ENCODE measurements at regions of chr1 and their contacts with region 1.

Region 1: DNA sequence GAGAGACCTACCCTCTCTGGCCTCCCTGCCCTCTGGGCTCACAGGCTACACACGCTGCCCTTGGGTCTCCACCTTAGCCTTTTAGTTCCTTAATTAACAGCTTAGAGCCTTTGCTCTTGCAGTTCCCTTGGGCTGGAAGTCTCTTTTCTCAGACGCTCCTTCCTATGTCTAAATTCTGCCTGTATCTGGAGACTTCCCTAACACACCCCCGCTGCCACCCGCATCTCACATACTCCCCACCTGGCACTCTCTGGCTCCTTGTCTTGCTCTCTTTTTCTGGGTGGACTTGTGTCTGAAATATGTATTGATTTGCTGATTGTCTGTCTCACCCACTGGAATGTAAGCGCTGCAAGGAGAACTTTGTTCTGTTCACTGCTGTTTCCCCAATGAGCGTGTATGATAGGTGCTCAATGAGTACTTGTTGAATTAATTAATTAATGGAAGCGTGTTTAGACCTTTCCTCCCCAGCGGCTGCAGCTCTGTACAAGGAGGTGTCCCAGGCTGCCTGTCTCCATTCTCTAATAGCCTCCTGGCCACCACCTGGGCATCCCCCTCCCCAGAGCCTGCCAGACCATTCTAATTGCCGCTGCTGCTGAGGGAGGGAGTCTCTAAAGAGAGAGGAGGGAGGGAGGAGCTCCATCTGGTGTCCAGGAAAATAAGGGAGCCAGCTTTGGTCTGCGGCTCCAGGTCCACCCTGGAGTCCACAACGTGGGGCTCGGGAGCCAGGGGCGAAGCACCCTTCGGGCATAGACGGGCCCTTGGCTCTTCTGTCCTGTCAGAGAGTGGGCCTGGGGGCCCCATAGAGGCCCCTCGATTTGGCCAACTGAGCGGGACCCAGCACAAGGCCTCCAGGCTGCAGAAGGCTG is 95.4 kb downstream of the RNF220 start:
- DNase-seq: peak in 9 of 10 donors; percentile 42 to 74 (median 61)
- H3K4me3 ChIP-seq: peak overlapping the region in 35 of 59 donors; percentile 0 to 46 (median 25)
- H3K27ac ChIP-seq: peak overlapping the region; percentile 40 to 100 (median 93)
- H3K27me3 ChIP-seq: peaks cover 0 to 10% (median 0%) of the 10 kb centered on the region in 45 donors
- CTCF ChIP-seq: peak in 55 of 56 donors; percentile 31 to 76 (median 58)

Region 2: GRCh38 chr1:44220001-44220733 is 280.2 kb before region 1 on chr1:
- intact Hi-C with region 1: loop called in 1 of 2 experiments (anchors 10 kb)
- DNase-seq: no peak
- H3K4me3 ChIP-seq: no peak overlapping the region
- H3K27ac ChIP-seq: peak overlapping the region in 46 of 59 donors; percentile 0 to 75 (median 38)
- H3K27me3 ChIP-seq: no peaks in the 10 kb centered on the region
- CTCF ChIP-seq: no peak

Region 3: DNA sequence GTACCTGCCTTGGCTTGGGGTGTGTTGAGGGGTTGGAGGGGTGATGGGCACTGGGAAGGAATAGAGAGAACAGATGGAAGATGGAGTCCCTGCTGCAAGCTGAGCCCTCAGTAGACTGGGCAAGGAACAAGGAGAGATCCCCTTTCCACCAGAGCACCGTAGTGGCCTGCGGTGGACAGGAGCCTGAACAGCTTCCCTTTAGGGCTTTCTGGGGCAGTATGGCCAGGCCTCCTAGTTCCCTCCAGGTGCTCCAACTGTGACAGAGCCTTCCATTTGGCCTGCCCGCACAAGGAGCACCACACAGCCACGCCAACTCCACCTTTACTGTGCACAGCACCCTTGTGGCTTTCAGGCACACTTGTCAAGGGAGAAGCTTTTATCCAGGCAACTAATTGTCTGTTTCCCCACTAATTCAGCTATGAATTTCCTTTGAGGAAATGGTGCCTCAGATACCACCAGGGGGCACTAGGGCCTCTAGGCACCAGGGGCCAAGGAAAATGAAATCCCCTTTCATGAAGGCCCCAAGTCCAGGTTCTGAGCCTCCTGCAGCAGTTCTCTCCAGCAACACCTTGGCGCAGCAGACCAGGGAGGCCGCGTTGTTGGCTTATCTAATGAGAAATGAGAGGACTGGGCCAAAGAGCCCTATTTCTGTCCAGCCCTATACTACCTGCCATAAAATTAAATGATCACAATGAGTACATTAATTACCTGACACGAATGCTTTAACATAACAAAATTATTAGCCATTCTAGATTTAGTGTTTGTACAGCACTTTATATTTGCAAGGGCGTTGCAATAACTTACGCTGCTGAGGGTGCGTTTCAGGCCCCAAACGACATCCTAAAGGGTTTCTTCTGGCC is 122.3 kb before region 1 on chr1:
- intact Hi-C with region 1: no loop called
- DNase-seq: peak in 7 of 10 donors; percentile 31 to 63 (median 50)
- H3K4me3 ChIP-seq: no peak overlapping the region
- H3K27ac ChIP-seq: peak overlapping the region in 38 of 59 donors; percentile 3 to 74 (median 46)
- H3K27me3 ChIP-seq: no peaks in the 10 kb centered on the region
- CTCF ChIP-seq: peak; percentile 62 to 92 (median 78)

Region 4: GRCh38 chr1:44405041-44405797 is 95.2 kb before region 1 on chr1 and contains the start of gene RNF220:
- intact Hi-C with region 1: loop called (anchors 1 to 2 kb)
- DNase-seq: peak; percentile 41 to 97 (median 92)
- H3K4me3 ChIP-seq: peak within 1 kb of the TSS; percentile 35 to 86 (median 69)
- H3K27ac ChIP-seq: peak within 1 kb of the TSS; percentile 63 to 97 (median 92)
- H3K27me3 ChIP-seq: peaks cover 0 to 63% (median 40%) of the 10 kb centered on the region in 45 donors
- CTCF ChIP-seq: peak in 48 of 56 donors; percentile 0 to 55 (median 36)
- total RNA-seq, gene RNF220: 104 to 415 (median 196) TPM

Region 5: GRCh38 chr1:44423591-44424537 is 76.5 kb before region 1 on chr1:
- intact Hi-C with region 1: loop called (anchors 5 kb)
- DNase-seq: no peak
- H3K4me3 ChIP-seq: peak overlapping the region in 25 of 59 donors; percentile 1 to 39 (median 16)
- H3K27ac ChIP-seq: peak overlapping the region in 56 of 59 donors; percentile 1 to 97 (median 64)
- H3K27me3 ChIP-seq: peaks cover 0 to 84% (median 21%) of the 10 kb centered on the region in 45 donors
- CTCF ChIP-seq: peak in 1 of 56 donors; percentile 11

Region 6: DNA sequence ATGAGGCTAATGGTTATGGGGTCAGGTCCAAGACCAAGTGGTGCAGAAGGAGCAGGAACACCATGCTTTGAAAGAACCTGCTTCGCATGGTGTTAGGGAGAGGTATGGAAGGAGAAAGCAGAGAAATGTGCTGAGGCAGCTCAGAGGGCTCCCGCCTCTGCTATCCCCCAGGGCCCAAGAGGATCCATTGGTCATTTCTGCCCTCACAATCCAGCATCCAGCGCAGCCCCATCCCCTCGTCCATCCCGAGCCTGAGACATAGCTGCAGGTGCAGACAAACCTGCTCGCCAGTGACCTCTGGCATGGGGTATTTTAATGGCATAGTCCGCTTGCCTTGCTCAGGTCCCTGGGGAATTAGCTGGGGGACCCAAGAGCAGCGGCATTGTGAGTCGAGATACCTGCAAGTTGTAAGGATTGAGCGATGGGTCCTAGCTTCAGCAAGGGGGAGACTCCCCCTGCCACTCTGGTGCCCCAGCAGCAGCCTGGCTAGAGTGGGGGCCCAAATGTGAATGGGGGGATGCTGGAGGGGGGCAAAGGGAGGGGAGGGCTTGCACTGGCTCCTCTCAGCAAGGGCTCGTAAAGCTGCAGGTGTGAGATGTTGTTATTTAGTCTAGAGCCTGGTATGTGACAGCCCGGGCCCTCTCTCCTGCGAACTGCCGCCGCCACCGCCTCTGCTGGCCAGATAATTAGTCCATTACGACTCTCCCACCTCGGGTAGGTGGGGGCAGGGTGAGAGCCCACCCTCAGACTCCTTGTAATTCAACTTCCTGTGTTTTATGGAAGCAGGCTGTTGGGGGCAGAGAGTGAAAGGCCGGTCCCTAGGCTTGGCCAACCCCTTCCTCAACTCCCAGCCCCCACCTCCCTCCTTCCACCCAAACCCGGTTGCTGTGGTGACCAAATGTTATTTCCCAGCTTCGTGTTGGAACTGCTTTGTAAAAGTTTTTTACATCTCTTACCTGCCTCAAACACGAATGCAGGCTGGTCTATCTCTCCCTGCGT is 23.5 kb after region 1 on chr1:
- intact Hi-C with region 1: no loop called
- DNase-seq: no peak
- H3K4me3 ChIP-seq: peak overlapping the region in 45 of 59 donors; percentile 3 to 54 (median 34)
- H3K27ac ChIP-seq: peak overlapping the region; percentile 33 to 100 (median 91)
- H3K27me3 ChIP-seq: no peaks in the 10 kb centered on the region
- CTCF ChIP-seq: no peak

Region 7: DNA sequence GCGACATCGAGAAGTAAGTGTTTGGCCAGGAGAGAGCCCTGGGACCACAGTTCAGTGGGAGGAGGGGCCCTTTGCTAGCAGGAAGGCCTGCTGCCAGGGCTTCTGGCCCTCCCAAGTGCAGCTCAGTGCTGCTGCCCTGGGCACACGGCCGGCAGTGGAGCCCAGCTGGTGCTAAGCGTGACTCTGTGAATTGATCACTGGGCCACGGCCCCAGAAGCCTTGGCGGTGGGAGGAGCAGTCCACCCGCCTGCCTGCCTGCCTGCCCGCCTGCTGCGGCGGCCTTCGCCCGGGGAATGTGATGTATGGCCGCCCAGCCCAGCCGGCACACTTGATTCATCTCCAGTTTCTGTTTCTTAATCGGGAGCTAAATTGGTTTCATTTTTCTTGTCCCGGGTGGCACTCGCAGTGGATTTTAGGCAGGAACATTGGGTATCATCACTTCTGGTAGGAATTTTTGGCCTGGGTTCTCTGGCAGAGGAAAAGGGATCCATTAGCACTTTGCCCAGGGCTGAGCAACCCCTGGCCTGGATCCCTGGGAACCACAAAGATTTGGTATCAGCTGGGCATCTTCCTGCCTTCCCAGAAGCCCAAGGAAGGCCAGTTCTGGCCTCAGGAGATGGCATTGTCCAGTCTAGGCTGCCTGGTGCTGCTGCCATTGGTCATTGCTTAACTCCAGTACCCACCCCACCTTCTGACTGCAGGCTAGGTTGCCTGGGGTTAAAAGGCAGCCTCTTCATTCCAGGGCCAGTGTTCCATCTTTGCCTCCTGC is 145.2 kb after region 1 on chr1:
- intact Hi-C with region 1: loop called in 1 of 2 experiments (anchors 2 kb)
- DNase-seq: peak; percentile 49 to 93 (median 91)
- H3K4me3 ChIP-seq: peak overlapping the region in 10 of 59 donors; percentile 2 to 32 (median 12)
- H3K27ac ChIP-seq: peak overlapping the region; percentile 62 to 94 (median 88)
- H3K27me3 ChIP-seq: no peaks in the 10 kb centered on the region
- CTCF ChIP-seq: peak in 40 of 56 donors; percentile 9 to 61 (median 36)